Esophagus squamous epithelium (tissue), 5 donors: ENCODE measurements at regions of chr12 and their contacts with region 1.

Region 1: DNA sequence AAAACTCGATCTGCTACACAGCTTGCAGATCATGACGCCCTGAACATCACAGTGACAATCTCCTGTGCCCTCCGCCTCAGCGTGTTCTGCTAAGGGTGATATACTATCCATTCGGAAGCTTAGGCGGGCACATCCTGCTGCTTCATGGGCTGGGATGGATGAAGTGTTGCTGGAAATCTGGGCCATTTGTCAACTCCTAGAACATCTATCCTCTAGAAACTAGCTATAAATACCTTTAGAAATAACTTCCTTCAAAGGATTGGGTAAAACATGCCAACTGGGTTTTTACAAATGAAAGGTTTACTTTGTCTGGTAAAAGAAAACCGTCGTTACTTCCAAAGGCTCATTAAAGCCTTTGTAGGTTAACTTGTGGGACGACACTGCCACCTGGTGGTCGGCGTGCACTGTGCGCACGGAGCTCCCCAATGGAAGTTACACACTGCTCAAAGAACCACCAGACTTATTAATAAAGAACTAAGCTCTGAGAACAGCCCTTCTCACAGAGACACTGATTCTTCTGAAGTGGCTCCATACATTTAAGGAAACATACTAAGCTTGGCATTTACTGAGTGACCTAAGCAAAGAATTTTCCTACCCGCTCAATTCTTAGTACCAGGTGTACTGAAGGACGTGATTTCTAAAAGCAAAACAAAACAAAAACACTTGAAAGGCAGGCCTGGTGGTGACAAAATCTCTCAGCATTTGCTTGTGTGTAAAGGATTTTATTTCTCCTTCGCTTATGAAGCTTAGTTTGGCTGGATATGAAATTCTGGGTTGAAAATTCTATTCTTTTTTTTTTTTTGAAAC is 21.6 kb upstream of the CACNA2D4 start:
- DNase-seq: no peak
- H3K4me3 ChIP-seq: peak overlapping the region in 1 of 4 donors; percentile 13
- H3K27ac ChIP-seq: peak overlapping the region in 3 of 4 donors; percentile 4 to 57 (median 47)
- H3K4me1 ChIP-seq: peaks cover 5 to 23% (median 7%) of the 10 kb centered on the region in 3 donors
- H3K27me3 ChIP-seq: no peaks in the 10 kb centered on the region
- CTCF ChIP-seq: peak; percentile 84 to 98 (median 96)
- POLR2A ChIP-seq: no peak

Region 2: GRCh38 chr12:1246637-1247036 is 693.4 kb before region 1 on chr12:
- intact Hi-C with region 1: no loop called
- DNase-seq: no peak
- H3K4me3 ChIP-seq: no peak overlapping the region
- H3K27ac ChIP-seq: no peak overlapping the region
- H3K4me1 ChIP-seq: peaks cover 0 to 18% (median 0%) of the 10 kb centered on the region in 3 donors
- H3K27me3 ChIP-seq: no peaks in the 10 kb centered on the region
- CTCF ChIP-seq: no peak
- POLR2A ChIP-seq: no peak

Region 3: GRCh38 chr12:1644534-1645438 is 295.2 kb before region 1 on chr12:
- intact Hi-C with region 1: loop called (anchors 10 kb)
- DNase-seq: no peak
- H3K4me3 ChIP-seq: no peak overlapping the region
- H3K27ac ChIP-seq: peak overlapping the region in 1 of 4 donors; percentile 50
- H3K4me1 ChIP-seq: peaks cover 4 to 31% (median 10%) of the 10 kb centered on the region in 3 donors
- H3K27me3 ChIP-seq: no peaks in the 10 kb centered on the region
- CTCF ChIP-seq: no peak
- POLR2A ChIP-seq: no peak

Region 4: DNA sequence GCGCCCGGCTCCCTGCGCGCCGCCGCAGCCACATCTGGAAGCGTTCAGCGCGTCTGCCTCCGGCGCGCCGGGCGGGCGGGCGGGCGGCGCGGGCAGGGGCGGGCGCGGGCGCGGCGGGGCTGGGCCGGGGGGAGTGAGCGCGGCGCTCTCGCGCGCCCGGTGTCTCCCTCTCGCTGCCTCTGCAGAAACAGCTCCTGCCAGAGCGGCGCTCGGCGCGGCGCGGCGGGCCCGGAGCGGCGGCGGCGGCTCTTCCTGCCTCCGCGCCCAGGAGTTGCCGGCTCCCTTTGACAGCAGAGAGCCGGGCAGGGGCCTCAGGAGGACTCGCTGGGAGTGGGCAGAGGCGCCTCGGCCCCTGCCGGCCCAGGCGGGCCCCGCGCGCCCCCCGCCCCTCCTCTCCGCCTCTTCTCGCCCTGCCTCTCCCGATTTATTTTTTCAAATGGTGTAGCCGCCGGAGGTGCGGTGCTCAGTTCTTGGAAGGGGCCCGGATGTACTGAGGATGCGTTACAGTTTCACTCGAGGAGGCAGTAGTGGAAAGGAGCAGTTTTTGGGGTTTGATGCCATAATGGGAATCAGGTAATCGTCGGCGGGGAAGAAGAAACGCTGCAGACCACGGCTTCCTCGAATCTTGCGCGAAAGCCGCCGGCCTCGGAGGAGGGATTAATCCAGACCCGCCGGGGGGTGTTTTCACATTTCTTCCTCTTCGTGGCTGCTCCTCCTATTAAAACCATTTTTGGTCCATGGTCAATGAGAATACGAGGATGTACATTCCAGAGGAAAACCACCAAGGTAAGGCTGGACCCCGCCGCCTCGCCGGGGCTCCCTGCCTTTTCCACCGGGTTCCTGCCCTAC is 113.0 kb after region 1 on chr12 and contains the start of gene CACNA1C:
- intact Hi-C with region 1: loop called (anchors 10 kb)
- DNase-seq: no peak
- H3K4me3 ChIP-seq: peak within 1 kb of the TSS; percentile 41 to 74 (median 52)
- H3K27ac ChIP-seq: peak within 1 kb of the TSS; percentile 40 to 89 (median 75)
- H3K4me1 ChIP-seq: peaks cover 0 to 42% (median 13%) of the 10 kb centered on the region in 3 donors
- H3K27me3 ChIP-seq: peaks cover 0 to 94% (median 0%) of the 10 kb centered on the region in 4 donors
- CTCF ChIP-seq: peak in 3 of 6 experiments; percentile 27 to 40 (median 30)
- POLR2A ChIP-seq: peak in 2 of 4 donors; percentile 45
- total RNA-seq, gene CACNA1C: 1.5 to 13.5 (median 2.1) TPM

Region 5: GRCh38 chr12:2137711-2138693 is 198.0 kb after region 1 on chr12:
- intact Hi-C with region 1: no loop called
- DNase-seq: no peak
- H3K4me3 ChIP-seq: no peak overlapping the region
- H3K27ac ChIP-seq: peak overlapping the region in 1 of 4 donors; percentile 5
- H3K4me1 ChIP-seq: peaks cover 0 to 7% (median 3%) of the 10 kb centered on the region in 3 donors
- H3K27me3 ChIP-seq: no peaks in the 10 kb centered on the region
- CTCF ChIP-seq: no peak
- POLR2A ChIP-seq: no peak

Region 6: GRCh38 chr12:2229661-2230539 is 289.9 kb after region 1 on chr12:
- intact Hi-C with region 1: no loop called
- DNase-seq: no peak
- H3K4me3 ChIP-seq: no peak overlapping the region
- H3K27ac ChIP-seq: no peak overlapping the region
- H3K4me1 ChIP-seq: no peaks in the 10 kb centered on the region
- H3K27me3 ChIP-seq: peaks cover 0 to 8% (median 0%) of the 10 kb centered on the region in 4 donors
- CTCF ChIP-seq: no peak
- POLR2A ChIP-seq: no peak